ENCODE measurements at regions of chr10 and their contacts with region 1.

Region 1: DNA sequence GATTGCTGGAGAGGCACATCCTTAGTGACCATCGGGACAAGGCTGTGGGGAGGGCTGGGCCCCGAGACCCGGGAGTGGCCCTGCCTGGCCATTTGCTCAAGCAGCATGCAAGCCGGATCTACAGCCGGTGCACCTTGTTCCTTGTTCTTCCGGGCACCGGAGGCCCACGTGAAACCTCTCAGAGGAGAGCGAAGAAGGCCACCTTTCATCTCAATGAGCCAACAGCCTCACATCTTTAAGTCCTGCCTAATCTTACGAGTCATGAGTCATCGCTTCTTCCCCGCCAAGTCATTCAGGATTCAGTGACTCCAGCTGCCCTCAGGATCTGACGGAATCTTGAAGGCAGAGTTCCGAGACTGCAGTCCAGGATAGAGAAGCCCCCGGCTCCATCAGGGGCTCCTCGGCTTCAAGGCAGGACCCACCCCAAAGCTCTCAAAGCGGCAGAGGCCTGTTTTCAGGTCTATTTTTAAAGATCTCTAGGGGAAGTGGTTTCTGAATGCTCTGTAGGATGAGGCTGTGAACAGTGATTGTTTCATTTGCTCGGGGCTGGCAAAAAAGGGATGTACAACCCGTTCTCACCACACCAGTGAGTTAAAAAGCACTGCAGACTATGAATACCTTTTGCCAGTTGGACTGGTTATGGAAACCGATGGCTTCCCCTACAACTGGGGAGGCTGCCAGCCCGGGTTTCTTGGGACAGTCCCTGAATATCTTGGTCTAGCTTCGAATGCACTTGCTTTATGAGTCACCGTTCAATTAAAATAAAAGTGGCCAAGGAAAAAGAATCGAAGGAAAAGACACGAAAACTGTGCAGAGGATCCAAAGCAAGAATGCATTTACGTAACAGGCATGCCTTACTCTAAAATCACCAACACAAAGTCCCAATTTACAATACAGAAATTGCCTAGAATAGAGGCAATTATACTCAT is 57.2 kb upstream of the ECHDC3 start:
- DNase-seq: peak; percentile 24 to 86 (median 62)
- ATAC-seq: peak; percentile 81
- H3K4me3 ChIP-seq: peak overlapping the region; percentile 45 to 47
- H3K4me3 Mint-ChIP-seq: peak overlapping the region; percentile 86
- H3K27ac ChIP-seq: peak overlapping the region; percentile 79 to 90
- H3K27ac Mint-ChIP-seq: peak overlapping the region; percentile 98
- H3K4me1 ChIP-seq: peaks cover 56% of the 10 kb centered on the region
- H3K4me1 Mint-ChIP-seq: peaks cover 70% of the 10 kb centered on the region
- H3K27me3 ChIP-seq: no peaks in the 10 kb centered on the region
- H3K27me3 Mint-ChIP-seq: no peaks in the 10 kb centered on the region
- CTCF ChIP-seq: no peak

Region 2: GRCh38 chr10:11705722-11706121 is 20.7 kb after region 1 on chr10:
- CTCF ChIA-PET with region 1: no interaction called
- POLR2A ChIA-PET with region 1: no interaction called
- intact Hi-C with region 1: loop called (anchors 2 kb)
- DNase-seq: no peak
- ATAC-seq: no peak
- H3K4me3 ChIP-seq: no peak overlapping the region
- H3K4me3 Mint-ChIP-seq: no peak overlapping the region
- H3K27ac ChIP-seq: no peak overlapping the region
- H3K27ac Mint-ChIP-seq: no peak overlapping the region
- H3K4me1 ChIP-seq: peaks cover 8% of the 10 kb centered on the region
- H3K4me1 Mint-ChIP-seq: peaks cover 5% of the 10 kb centered on the region
- H3K27me3 ChIP-seq: no peaks in the 10 kb centered on the region
- H3K27me3 Mint-ChIP-seq: peaks cover 7% of the 10 kb centered on the region
- CTCF ChIP-seq: no peak

Region 3: GRCh38 chr10:11713186-11713743 is 28.3 kb after region 1 on chr10:
- CTCF ChIA-PET with region 1: no interaction called
- POLR2A ChIA-PET with region 1: no interaction called
- intact Hi-C with region 1: loop called in 1 of 2 experiments (anchors 2 kb)
- DNase-seq: no peak
- ATAC-seq: no peak
- H3K4me3 ChIP-seq: no peak overlapping the region
- H3K4me3 Mint-ChIP-seq: no peak overlapping the region
- H3K27ac ChIP-seq: no peak overlapping the region
- H3K27ac Mint-ChIP-seq: no peak overlapping the region
- H3K4me1 ChIP-seq: peaks cover 8% of the 10 kb centered on the region
- H3K4me1 Mint-ChIP-seq: peaks cover 22% of the 10 kb centered on the region
- H3K27me3 ChIP-seq: peaks cover 0 to 5% of the 10 kb centered on the region in 2 experiments
- H3K27me3 Mint-ChIP-seq: peaks cover 9% of the 10 kb centered on the region
- CTCF ChIP-seq: no peak